Left cardiac atrium (tissue), 4 donors: ENCODE measurements at regions of chr4 and their contacts with region 1.

Region 1: GRCh38 chr4:26404743-26405206 is 84.0 kb downstream of the RBPJ start:
- DNase-seq: no peak
- ATAC-seq: peak in 1 of 2 donors; percentile 39

Region 2: GRCh38 chr4:25993395-25994185 is 411.2 kb before region 1 on chr4:
- intact Hi-C with region 1: loop called in 1 of 2 experiments (anchors 2 kb)
- DNase-seq: no peak
- ATAC-seq: peak in 1 of 2 donors; percentile 62

Region 3: GRCh38 chr4:26081795-26082498 is 322.8 kb before region 1 on chr4:
- intact Hi-C with region 1: loop called in 1 of 2 experiments (anchors 5 kb)
- DNase-seq: no peak
- ATAC-seq: peak; percentile 61 to 73

Region 4: DNA sequence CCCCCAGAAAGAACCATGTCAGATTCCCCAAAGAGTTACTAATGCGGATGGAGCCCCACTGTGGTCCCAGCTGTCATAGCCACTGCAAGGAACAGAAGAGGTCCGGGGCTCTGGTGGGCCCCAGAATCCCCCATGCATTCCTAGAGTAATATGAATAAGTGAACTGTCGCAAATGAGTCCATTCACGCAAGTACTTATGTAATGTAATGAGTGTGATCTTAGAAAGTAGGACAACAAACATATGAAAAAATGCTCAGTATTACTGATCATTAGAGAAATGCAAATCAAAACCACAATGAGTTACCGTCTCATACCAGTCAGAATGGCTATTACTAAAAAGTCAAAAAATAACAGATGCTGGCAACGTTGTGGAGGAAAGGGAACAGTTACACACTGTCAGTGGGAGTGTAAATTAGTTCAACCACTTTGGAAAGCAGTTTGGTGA is 225.4 kb before region 1 on chr4:
- intact Hi-C with region 1: no loop called
- DNase-seq: no peak
- ATAC-seq: no peak

Region 5: GRCh38 chr4:26330186-26330787 is 74.5 kb before region 1 on chr4:
- intact Hi-C with region 1: loop called in 1 of 2 experiments (anchors 10 kb)
- DNase-seq: no peak
- ATAC-seq: peak; percentile 68 to 78

Region 6: DNA sequence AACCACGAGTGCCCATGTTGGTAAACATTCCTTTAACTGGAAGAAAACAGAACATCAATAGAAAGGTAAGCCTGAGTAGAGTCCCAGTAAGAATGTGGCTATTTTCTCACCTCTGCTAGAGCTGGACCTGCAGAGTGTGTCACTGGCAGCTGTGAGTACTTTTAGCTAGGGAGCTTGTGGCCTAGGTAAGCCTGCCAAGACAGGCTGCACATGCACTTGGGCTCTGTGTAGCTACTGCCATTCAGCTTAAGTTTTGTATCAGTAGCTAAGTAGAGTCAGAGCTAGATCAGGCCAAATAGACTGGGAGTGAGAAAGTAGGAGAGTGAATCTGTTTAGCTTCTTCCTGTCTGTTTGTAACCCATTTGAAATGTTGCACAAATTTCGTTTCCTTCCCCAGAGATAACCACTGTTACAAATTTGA is 48.7 kb before region 1 on chr4:
- intact Hi-C with region 1: no loop called
- DNase-seq: no peak
- ATAC-seq: peak in 1 of 2 donors; percentile 74